WTC11 (cell line): ENCODE measurements at regions of chr19 and their contacts with region 1.

Region 1: GRCh38 chr19:43668406-43669158 is 1.4 kb downstream of the PLAUR start:
- DNase-seq: peak; percentile 99
- ATAC-seq: peak; percentile 89
- H3K4me3 Mint-ChIP-seq: peak overlapping the region; percentile 89
- H3K27ac Mint-ChIP-seq: peak overlapping the region; percentile 91
- H3K4me1 Mint-ChIP-seq: peaks cover 31% of the 10 kb centered on the region
- H3K27me3 Mint-ChIP-seq: peaks cover 31% of the 10 kb centered on the region
- CTCF ChIP-seq: no peak

Region 2: GRCh38 chr19:43463381-43464136 is 205.0 kb before region 1 on chr19:
- CTCF ChIA-PET with region 1: interaction called, 14 read pairs
- POLR2A ChIA-PET with region 1: interaction called, 7 read pairs
- DNase-seq: peak; percentile 99
- ATAC-seq: peak; percentile 89
- H3K4me3 Mint-ChIP-seq: peak overlapping the region; percentile 91
- H3K27ac Mint-ChIP-seq: peak overlapping the region; percentile 99
- H3K4me1 Mint-ChIP-seq: peaks cover 14% of the 10 kb centered on the region
- H3K27me3 Mint-ChIP-seq: peaks cover 71% of the 10 kb centered on the region
- CTCF ChIP-seq: no peak

Region 3: GRCh38 chr19:43634872-43635560 is 33.6 kb before region 1 on chr19:
- CTCF ChIA-PET with region 1: interaction called, 10 read pairs
- POLR2A ChIA-PET with region 1: no interaction called
- DNase-seq: no peak
- ATAC-seq: peak; percentile 53
- H3K4me3 Mint-ChIP-seq: peak overlapping the region; percentile 82
- H3K27ac Mint-ChIP-seq: peak overlapping the region; percentile 41; the same call in 1 of the 2 replicates
- H3K4me1 Mint-ChIP-seq: peaks cover 20% of the 10 kb centered on the region
- H3K27me3 Mint-ChIP-seq: peaks cover 63% of the 10 kb centered on the region
- CTCF ChIP-seq: no peak

Region 4: GRCh38 chr19:43700395-43701000 is 31.9 kb after region 1 on chr19:
- CTCF ChIA-PET with region 1: interaction called, 16 read pairs
- POLR2A ChIA-PET with region 1: interaction called, 3 read pairs
- DNase-seq: no peak
- ATAC-seq: no peak
- H3K4me3 Mint-ChIP-seq: no peak overlapping the region
- H3K27ac Mint-ChIP-seq: no peak overlapping the region
- H3K4me1 Mint-ChIP-seq: peaks cover 8% of the 10 kb centered on the region
- H3K27me3 Mint-ChIP-seq: peaks cover 35% of the 10 kb centered on the region
- CTCF ChIP-seq: no peak

Region 5: GRCh38 chr19:43743022-43743421 is 74.4 kb after region 1 on chr19:
- CTCF ChIA-PET with region 1: interaction called, 19 read pairs
- POLR2A ChIA-PET with region 1: no interaction called
- DNase-seq: no peak
- ATAC-seq: no peak
- H3K4me3 Mint-ChIP-seq: no peak overlapping the region
- H3K27ac Mint-ChIP-seq: no peak overlapping the region
- H3K4me1 Mint-ChIP-seq: peaks cover 6% of the 10 kb centered on the region; the same call in 1 of the 2 replicates
- H3K27me3 Mint-ChIP-seq: no peaks in the 10 kb centered on the region
- CTCF ChIP-seq: no peak

Region 6: GRCh38 chr19:43774103-43774939 is 105.7 kb after region 1 on chr19:
- CTCF ChIA-PET with region 1: interaction called, 12 read pairs
- POLR2A ChIA-PET with region 1: interaction called, 4 read pairs
- DNase-seq: peak; percentile 92
- ATAC-seq: peak; percentile 83
- H3K4me3 Mint-ChIP-seq: peak overlapping the region; percentile 72
- H3K27ac Mint-ChIP-seq: no peak overlapping the region
- H3K4me1 Mint-ChIP-seq: peaks cover 39% of the 10 kb centered on the region
- H3K27me3 Mint-ChIP-seq: peaks cover 75% of the 10 kb centered on the region
- CTCF ChIP-seq: peak; percentile 44